Body of pancreas (tissue), 4 donors: ENCODE measurements at regions of chr11 and their contacts with region 1.

Region 1: GRCh38 chr11:44731685-44732430 is 5.1 kb downstream of the TSPAN18 start:
- DNase-seq: no peak
- ATAC-seq: no peak
- H3K4me3 ChIP-seq: no peak overlapping the region
- H3K27ac ChIP-seq: no peak overlapping the region
- H3K4me1 ChIP-seq: peaks cover 14% of the 10 kb centered on the region
- H3K27me3 ChIP-seq: peaks cover 0 to 7% of the 10 kb centered on the region in 2 donors
- CTCF ChIP-seq: no peak
- POLR2A ChIP-seq: no peak

Region 2: GRCh38 chr11:44911029-44911814 is 179.4 kb after region 1 on chr11:
- intact Hi-C with region 1: loop called (anchors 5 kb)
- DNase-seq: peak; percentile 88 to 91 (median 88)
- ATAC-seq: peak; percentile 86
- H3K4me3 ChIP-seq: no peak overlapping the region
- H3K27ac ChIP-seq: no peak overlapping the region
- H3K4me1 ChIP-seq: peaks cover 6% of the 10 kb centered on the region
- H3K27me3 ChIP-seq: no peaks in the 10 kb centered on the region
- CTCF ChIP-seq: peak; percentile 69 to 84 (median 78)
- POLR2A ChIP-seq: no peak

Region 3: DNA sequence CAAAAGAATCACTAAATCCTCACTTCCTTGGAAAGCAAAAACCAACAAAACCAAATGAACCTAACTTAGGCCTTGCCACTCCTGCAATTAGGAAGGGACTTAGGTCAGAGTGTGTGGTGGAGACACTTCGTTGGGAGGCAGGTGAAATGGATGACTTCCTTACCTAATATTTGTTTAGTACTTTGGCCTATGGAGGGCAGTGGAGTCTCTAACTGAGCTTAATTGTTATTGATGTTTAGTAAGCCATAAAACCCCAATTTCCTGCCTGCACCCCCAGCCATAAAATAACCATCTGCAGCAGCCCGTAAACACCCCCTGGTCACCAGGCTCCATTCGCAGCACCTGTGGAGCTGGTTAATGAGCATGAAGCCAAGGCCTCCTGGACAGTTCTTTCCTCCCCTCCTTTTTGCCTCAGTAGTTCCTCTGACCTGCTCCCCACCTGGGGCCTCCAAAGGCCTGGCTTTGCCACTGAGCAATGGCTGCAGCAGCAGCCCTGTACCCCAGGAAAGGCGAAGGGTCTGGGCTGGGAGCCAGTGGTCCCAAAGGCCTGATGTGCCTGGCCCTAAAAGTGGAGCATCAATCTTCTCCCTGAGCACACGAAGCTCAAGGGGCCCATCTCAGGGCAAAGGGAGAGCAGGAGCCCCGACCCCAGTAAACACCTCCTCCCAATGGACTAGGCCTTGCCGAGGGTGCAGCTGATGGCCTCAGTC is 569.8 kb after region 1 on chr11:
- intact Hi-C with region 1: no loop called
- DNase-seq: no peak
- ATAC-seq: no peak
- H3K4me3 ChIP-seq: no peak overlapping the region
- H3K27ac ChIP-seq: no peak overlapping the region
- H3K4me1 ChIP-seq: no peaks in the 10 kb centered on the region
- H3K27me3 ChIP-seq: no peaks in the 10 kb centered on the region
- CTCF ChIP-seq: no peak
- POLR2A ChIP-seq: no peak